ENCODE measurements at regions of chr12 and their contacts with region 1.

Region 1: DNA sequence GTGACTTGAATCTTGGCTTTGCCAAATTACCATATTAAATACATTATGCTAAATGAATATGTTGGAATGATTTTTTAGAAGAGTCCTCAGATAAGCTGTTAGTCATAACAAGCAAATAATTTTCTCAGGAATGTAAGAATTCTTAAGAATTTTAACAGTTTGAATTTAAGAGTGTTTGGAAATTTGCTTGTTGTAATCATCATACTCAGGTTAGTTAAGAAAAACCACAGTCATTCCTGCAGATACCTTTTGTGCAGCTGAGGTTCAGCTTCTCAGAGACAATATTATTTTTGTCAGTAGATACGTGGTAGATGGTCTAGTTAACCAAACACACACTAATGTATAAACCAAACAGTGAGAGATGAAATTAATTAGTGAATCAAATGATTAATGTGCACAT is 8.9 kb downstream of the WNK1 start:
- H3K4me3 Mint-ChIP-seq: no peak overlapping the region
- H3K27ac Mint-ChIP-seq: no peak overlapping the region
- H3K4me1 Mint-ChIP-seq: peaks cover 60% of the 10 kb centered on the region
- H3K27me3 Mint-ChIP-seq: no peaks in the 10 kb centered on the region

Region 2: DNA sequence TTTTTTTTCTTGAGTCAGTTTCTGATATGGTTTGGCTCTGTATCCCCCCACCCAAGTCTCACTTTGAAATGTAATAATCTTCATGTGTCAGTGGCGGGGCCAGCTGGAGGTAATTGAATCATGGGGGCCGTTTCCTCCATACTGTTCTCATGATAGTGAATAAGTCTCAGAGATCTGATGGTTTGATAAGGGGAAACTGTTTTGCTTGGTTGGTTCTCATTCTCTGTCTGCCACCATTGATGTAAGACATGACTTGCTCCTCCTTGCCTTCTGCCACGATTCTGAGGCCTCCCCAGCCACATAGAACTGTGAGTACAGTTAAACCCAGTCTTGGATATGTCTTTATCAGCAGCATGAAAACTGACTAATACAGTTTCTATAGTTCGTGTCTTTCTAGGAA is 34.0 kb after region 1 on chr12:
- intact Hi-C with region 1: loop called (anchors 5 kb)
- H3K4me3 Mint-ChIP-seq: no peak overlapping the region
- H3K27ac Mint-ChIP-seq: no peak overlapping the region
- H3K4me1 Mint-ChIP-seq: peaks cover 65% of the 10 kb centered on the region
- H3K27me3 Mint-ChIP-seq: no peaks in the 10 kb centered on the region

Region 3: GRCh38 chr12:1047898-1048660 is 286.8 kb after region 1 on chr12:
- intact Hi-C with region 1: no loop called
- H3K4me3 Mint-ChIP-seq: peak overlapping the region; percentile 75
- H3K27ac Mint-ChIP-seq: peak overlapping the region; percentile 88
- H3K4me1 Mint-ChIP-seq: peaks cover 26% of the 10 kb centered on the region
- H3K27me3 Mint-ChIP-seq: no peaks in the 10 kb centered on the region

Region 4: GRCh38 chr12:1619587-1619986 is 858.3 kb after region 1 on chr12:
- intact Hi-C with region 1: no loop called
- H3K4me3 Mint-ChIP-seq: peak overlapping the region; percentile 88
- H3K27ac Mint-ChIP-seq: peak overlapping the region; percentile 77
- H3K4me1 Mint-ChIP-seq: peaks cover 73% of the 10 kb centered on the region
- H3K27me3 Mint-ChIP-seq: no peaks in the 10 kb centered on the region

Measured in dendritic cell treated with granulocyte-macrophage colony-stimulating factor and Interleukin-4, amounts not matched to agents 40 ng/mL and 50 ng/mL, for 4 days (primary cell).